MCF 10A (cell line): ENCODE measurements at regions of chr15 and their contacts with region 1.

Region 1: DNA sequence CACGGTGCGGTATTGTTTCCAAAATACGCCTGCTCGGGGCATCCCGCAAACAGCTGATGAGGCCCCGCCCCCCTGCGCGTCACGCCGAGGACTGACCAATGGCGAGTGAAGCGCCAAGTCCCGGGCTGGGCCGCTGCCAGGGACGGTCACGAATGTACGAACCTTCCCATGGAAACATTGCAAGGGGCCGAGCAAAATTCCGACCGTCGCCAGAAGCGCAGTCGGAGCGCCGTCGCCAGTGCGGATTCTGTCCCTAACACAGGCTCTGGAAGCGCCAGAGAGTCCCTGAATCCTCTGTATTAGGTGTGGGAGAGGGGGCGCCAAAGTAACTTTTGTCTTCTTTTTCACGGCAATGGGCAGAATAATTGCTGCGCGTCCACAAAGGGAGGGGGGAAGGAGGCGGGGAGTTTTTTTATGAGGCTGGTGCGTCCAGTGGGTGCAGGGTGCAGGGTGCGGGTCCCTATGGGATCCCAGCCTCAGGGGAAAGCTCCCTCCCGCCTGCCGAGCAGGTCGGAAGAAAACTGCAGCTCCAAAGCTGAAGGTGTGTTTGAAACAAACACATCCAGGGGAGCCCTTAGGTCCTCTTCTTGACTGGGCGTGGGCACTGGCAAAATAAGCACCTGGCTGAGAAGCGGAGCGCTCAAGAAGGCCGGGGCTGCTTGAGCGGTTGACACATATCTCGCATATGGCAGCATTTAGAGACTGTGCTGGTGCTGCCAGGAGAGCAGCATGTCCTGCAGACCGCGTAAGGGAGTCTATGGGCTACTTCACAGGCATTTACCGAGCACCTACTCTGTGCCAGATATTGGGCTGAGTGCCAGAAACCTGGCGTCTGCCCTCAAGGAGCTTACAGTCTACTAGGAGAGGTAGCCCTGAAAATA is at the start of gene BMF:
- DNase-seq: peak; percentile 98
- H3K4me3 Mint-ChIP-seq: peak within 1 kb of the TSS; percentile 89
- H3K27ac Mint-ChIP-seq: peak within 1 kb of the TSS; percentile 46
- H3K4me1 Mint-ChIP-seq: peaks cover 37% of the 10 kb centered on the region
- H3K27me3 Mint-ChIP-seq: no peaks in the 10 kb centered on the region
- CTCF ChIP-seq: peak; percentile 23
- total RNA-seq, gene BMF: 0.17 TPM in 1 of 2 replicates, not detected in the other

Region 2: GRCh38 chr15:40044717-40045571 is 64.2 kb before region 1 on chr15:
- CTCF ChIA-PET with region 1: interaction called, 125 read pairs
- POLR2A ChIA-PET with region 1: interaction called, 16 read pairs
- intact Hi-C with region 1: no loop called
- DNase-seq: peak; percentile 83
- H3K4me3 Mint-ChIP-seq: peak overlapping the region; percentile 41
- H3K27ac Mint-ChIP-seq: no peak overlapping the region
- H3K4me1 Mint-ChIP-seq: peaks cover 26% of the 10 kb centered on the region
- H3K27me3 Mint-ChIP-seq: no peaks in the 10 kb centered on the region
- CTCF ChIP-seq: peak; percentile 95

Region 3: DNA sequence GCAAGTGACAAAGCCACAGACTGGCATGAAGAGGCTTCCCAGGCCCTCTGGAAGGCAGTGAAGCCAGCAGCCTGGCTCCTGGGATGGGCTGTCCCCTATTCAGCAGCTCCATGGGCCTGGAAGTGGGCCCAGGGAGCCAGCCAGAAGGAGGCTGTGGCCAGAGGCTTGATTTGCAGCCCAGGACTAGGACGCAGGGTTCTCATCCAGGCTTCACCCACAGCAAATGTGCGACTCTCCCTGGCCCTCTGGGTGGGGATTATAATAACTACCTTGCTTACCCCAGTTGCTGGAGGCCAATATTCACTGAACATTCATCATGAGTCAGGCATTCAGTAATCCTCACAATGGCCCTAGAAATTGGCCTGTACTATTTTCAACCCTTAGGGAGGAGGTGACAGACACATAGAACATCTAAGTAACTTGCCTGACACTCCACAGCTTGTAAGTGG is 45.5 kb before region 1 on chr15:
- CTCF ChIA-PET with region 1: interaction called, 28 read pairs
- POLR2A ChIA-PET with region 1: interaction called, 4 read pairs
- intact Hi-C with region 1: no loop called
- DNase-seq: peak; percentile 91
- H3K4me3 Mint-ChIP-seq: no peak overlapping the region
- H3K27ac Mint-ChIP-seq: no peak overlapping the region
- H3K4me1 Mint-ChIP-seq: peaks cover 3% of the 10 kb centered on the region
- H3K27me3 Mint-ChIP-seq: no peaks in the 10 kb centered on the region
- CTCF ChIP-seq: no peak

Region 4: DNA sequence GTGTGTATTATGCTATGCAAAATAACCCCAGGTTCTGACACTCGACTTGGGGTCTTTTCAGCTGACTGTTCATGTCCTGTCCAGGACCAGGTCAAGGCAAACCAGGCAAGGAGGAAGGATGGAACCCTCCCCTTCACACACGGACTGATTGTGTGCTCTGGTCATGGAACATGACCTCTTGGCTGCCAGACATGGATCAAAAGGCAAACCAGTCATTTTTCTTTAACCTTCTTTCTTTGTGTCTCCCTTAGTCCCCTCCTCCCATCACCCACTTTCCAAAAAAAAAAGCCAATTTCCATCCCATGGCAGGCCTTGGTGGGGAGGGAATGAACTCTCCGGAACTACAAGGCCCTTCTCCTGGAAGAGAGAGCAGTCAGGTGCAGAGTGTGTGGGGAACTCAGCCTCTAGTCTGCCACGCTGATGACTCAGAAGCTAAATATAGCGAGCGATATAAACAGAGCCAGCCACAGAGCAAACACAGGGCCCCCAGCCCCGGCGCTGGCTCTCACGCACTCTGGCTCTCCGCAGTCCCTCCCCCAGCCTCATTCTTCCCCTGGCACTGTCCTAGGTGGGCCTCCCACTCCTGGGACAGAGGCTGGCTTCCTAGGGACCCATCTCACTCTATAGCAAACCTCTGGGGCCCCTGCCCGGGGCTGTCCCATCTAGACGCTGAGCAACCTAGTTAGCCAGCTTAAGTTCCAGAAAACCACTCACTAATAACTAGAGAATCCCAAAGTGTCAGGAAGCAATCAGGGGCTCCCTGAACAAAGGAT is 10.4 kb before region 1 on chr15:
- CTCF ChIA-PET with region 1: interaction called, 43 read pairs
- POLR2A ChIA-PET with region 1: interaction called, 6 read pairs
- intact Hi-C with region 1: no loop called
- DNase-seq: peak; percentile 86
- H3K4me3 Mint-ChIP-seq: no peak overlapping the region
- H3K27ac Mint-ChIP-seq: peak overlapping the region; percentile 73
- H3K4me1 Mint-ChIP-seq: peaks cover 24% of the 10 kb centered on the region
- H3K27me3 Mint-ChIP-seq: no peaks in the 10 kb centered on the region
- CTCF ChIP-seq: no peak

Region 5: DNA sequence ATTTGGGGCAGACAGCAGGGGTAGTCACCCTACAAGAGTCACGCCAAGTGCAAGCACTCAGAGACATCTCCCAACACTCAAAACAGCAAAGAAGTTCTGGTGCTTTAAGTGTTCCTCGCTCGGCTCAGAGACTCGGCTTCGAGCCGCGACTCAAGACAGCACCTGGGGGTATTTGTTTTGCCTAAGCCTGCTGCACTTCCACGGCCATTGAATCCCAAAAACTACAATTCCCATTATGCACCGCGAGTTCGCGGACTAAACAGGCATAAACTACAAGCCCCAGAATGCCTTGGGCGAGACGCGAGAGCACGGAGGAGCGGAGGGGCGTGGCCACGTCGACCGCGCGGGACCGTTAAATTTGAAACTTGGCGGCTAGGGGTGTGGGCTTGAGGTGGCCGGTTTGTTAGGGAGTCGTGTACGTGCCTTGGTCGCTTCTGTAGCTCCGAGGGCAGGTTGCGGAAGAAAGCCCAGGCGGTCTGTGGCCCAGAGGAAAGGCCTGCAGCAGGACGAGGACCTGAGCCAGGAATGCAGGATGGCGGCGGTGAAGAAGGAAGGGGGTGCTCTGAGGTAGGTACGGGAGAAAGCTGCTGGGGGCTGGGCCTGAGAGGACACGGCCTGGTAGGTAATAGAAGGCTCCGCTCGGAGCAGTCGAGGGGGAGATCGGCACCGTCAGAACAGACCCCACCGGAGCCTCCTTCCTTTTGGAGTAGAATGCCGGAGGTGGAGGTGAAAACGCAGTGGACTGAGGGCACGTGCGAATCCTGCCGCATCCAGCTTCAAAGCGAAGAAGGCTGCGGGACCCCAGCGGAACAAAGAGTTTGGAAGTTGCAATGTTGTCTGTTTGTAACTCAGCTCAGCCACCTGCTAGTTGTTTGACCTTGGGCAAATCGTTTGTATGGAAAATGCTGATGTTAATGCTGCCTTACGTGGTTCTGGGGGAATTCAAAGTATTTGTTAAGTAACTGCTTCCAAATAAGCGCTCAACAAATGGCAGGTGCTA is 51.9 kb after region 1 on chr15 and contains the start of gene BUB1B:
- CTCF ChIA-PET with region 1: interaction called, 14 read pairs
- POLR2A ChIA-PET with region 1: interaction called, 9 read pairs
- intact Hi-C with region 1: loop called (anchors 1 kb)
- DNase-seq: peak; percentile 96
- H3K4me3 Mint-ChIP-seq: no peak within 1 kb of the TSS
- H3K27ac Mint-ChIP-seq: no peak within 1 kb of the TSS
- H3K4me1 Mint-ChIP-seq: no peaks in the 10 kb centered on the region
- H3K27me3 Mint-ChIP-seq: no peaks in the 10 kb centered on the region
- CTCF ChIP-seq: no peak
- total RNA-seq, gene BUB1B: 24.4 and 30.9 TPM in 2 replicates